PC-3 (cell line): ENCODE measurements at regions of chr7 and their contacts with region 1.

Region 1: DNA sequence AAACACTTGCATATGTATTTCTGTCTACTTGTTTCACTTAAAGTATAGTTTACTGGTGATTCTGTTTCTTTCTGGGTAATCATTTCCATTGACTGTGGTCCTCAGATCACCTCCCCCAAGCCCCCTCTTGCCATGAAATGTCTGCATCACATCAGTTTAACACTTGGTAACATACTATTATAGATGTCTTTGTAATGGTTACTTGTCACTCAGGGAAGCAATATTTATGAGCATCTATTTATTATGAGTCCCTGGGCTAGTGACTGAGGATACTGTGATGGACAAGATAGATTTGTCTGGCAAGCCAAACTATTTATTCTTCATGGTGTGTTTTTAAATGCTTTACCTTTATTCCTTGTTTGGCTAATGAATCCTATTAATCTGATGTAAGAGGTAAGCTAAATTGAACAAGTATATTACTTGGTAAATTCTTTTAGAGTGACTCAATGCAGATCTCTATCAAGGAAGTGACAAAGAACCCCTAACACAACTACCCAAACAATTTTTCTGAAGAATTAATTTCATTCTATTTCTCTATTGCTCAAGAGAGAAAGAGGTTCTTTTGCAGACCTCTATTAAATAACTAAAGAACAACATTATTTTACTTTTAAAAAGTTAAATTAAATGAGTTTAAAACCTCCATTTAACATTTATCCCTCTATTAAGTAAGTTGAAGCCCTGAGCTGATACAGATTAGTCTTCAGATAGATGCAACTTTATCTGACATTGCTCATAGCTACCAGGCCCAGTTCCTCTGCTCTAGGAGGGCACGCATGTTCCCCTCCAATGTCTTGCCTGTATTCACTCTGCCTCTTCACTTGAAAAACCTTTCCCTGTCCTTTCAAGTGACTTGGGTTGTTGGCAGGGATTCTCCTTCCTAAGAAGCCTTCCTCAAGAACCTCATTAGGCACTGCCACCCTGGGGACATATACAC is 270.7 kb downstream of the RELN start:
- DNase-seq: peak; percentile 75
- ATAC-seq: peak; percentile 88
- H3K4me3 ChIP-seq: no peak overlapping the region
- H3K27ac ChIP-seq: peak overlapping the region; percentile 79
- H3K4me1 ChIP-seq: peaks cover 25% of the 10 kb centered on the region
- H3K27me3 ChIP-seq: no peaks in the 10 kb centered on the region
- CTCF ChIP-seq: no peak

Region 2: DNA sequence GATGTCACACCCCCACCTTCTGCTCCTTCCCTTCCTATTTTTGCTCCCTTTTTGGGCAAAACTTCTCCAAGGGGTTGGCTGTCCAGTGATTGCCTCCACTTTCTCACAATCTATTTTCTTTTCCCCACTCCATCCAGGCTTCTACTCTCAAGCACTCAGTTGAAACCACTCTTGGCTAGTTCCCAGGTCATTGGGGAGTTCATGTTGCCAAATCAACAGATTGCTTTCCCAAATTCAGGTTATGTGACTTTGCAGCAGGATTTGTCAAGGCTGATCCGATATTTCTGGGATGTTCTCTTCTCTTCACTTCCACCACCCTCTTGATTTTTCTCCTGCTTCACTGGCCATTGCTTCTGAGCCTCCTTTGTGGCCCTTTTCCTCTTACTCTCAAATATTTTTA is 14.0 kb before region 1 on chr7:
- CTCF ChIA-PET with region 1: no interaction called
- POLR2A ChIA-PET with region 1: no interaction called
- intact Hi-C with region 1: no loop called
- DNase-seq: no peak
- ATAC-seq: no peak
- H3K4me3 ChIP-seq: no peak overlapping the region
- H3K27ac ChIP-seq: no peak overlapping the region
- H3K4me1 ChIP-seq: peaks cover 11% of the 10 kb centered on the region; the same call in 1 of the 2 replicates
- H3K27me3 ChIP-seq: no peaks in the 10 kb centered on the region
- CTCF ChIP-seq: no peak

Region 3: DNA sequence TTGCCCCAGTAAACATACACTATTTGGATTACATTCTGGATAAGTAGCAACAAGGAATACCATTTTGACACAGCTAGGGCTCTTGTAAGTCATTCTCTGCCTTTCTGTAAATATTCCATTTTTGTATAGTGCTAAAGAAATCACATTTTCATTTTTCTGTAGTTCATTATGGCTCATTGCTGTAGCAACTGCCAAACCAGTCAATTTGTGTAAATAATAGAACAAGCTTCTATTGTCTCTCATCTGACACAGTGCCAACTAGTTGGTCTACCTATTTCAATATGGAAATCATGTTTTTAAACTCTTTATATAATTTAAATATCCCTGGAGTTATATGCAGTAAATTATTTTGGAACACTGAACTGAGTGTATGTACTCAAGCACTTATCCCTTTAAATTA is 77.0 kb after region 1 on chr7:
- CTCF ChIA-PET with region 1: no interaction called
- POLR2A ChIA-PET with region 1: no interaction called
- intact Hi-C with region 1: loop called (anchors 2 kb)
- DNase-seq: peak; percentile 56
- ATAC-seq: peak; percentile 68
- H3K4me3 ChIP-seq: no peak overlapping the region
- H3K27ac ChIP-seq: peak overlapping the region; percentile 76
- H3K4me1 ChIP-seq: peaks cover 20% of the 10 kb centered on the region
- H3K27me3 ChIP-seq: no peaks in the 10 kb centered on the region
- CTCF ChIP-seq: no peak